ENCODE measurements at regions of chr12 and their contacts with region 1.

Region 1: DNA sequence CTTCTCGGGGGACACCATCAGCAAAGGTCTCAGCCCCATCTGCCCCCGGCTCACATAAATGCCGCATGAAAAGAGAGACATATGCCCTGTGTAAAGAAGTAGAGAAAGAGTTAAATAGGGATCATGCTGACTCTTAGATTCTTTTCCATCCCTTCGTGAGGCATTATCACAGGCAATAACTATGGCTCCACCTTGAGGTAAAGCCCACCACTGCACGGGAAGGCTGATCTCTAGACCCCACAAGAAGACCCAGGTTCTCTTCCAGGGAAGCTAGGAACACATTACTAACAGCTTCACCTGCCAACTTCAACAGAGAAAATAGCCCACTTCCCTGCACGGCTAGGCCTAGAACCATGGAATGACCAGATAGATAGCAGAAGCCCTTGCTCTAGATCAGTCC is 14.1 kb upstream of the NOP2 start:
- DNase-seq: peak; percentile 17 to 52 (median 41)
- H3K4me3 ChIP-seq: no peak overlapping the region
- H3K27ac ChIP-seq: no peak overlapping the region
- H3K4me1 ChIP-seq: no peaks in the 10 kb centered on the region
- H3K27me3 ChIP-seq: no peaks in the 10 kb centered on the region

Region 2: GRCh38 chr12:6335451-6336078 is 246.6 kb before region 1 on chr12:
- CTCF ChIA-PET with region 1: no interaction called
- POLR2A ChIA-PET with region 1: no interaction called
- DNase-seq: peak; percentile 87 to 96 (median 94)
- H3K4me3 ChIP-seq: peak overlapping the region in 6 of 7 experiments; percentile 65 to 99 (median 98)
- H3K27ac ChIP-seq: peak overlapping the region; percentile 74 to 96
- H3K4me1 ChIP-seq: peaks cover 30 to 81% (median 78%) of the 10 kb centered on the region in 4 experiments
- H3K27me3 ChIP-seq: no peaks in the 10 kb centered on the region

Region 3: GRCh38 chr12:6563448-6564050 is 18.6 kb before region 1 on chr12:
- CTCF ChIA-PET with region 1: interaction called, 12 read pairs
- POLR2A ChIA-PET with region 1: interaction called, 3 read pairs
- DNase-seq: peak; percentile 60 to 70 (median 62)
- H3K4me3 ChIP-seq: no peak overlapping the region
- H3K27ac ChIP-seq: no peak overlapping the region
- H3K4me1 ChIP-seq: peaks cover 7 to 18% (median 9%) of the 10 kb centered on the region in 4 experiments
- H3K27me3 ChIP-seq: no peaks in the 10 kb centered on the region